ENCODE measurements at regions of chr1 and their contacts with region 1.

Region 1: GRCh38 chr1:147242439-147243227 is at the start of gene CHD1L:
- DNase-seq: peak; percentile 93

Region 2: GRCh38 chr1:147172168-147172992 is 70.3 kb before region 1 on chr1 and contains the start of gene PRKAB2:
- CTCF ChIA-PET with region 1: interaction called, 5 read pairs
- POLR2A ChIA-PET with region 1: interaction called, 27 read pairs
- DNase-seq: peak; percentile 96

Region 3: DNA sequence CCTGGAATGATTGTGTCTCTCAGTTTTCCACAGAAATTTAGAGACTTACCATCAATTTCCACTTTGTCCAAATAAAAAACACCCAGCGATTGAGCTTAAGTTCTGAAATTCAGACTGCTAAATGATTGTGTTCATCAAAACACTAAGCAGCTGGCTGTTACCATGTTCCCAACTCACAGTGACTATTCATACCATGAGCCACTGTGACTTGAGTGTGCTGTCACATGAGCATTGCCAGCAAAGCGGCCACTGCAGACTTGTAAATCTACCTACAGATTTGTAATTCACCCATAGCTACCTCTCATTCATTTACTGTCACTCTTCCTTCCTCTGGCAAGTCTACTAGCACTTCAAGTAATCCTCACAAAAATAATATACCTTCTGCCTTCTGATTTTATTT is 53.1 kb before region 1 on chr1:
- CTCF ChIA-PET with region 1: no interaction called
- POLR2A ChIA-PET with region 1: no interaction called
- DNase-seq: no peak